Calu3 (cell line): ENCODE measurements at regions of chr7 and their contacts with region 1.

Region 1: DNA sequence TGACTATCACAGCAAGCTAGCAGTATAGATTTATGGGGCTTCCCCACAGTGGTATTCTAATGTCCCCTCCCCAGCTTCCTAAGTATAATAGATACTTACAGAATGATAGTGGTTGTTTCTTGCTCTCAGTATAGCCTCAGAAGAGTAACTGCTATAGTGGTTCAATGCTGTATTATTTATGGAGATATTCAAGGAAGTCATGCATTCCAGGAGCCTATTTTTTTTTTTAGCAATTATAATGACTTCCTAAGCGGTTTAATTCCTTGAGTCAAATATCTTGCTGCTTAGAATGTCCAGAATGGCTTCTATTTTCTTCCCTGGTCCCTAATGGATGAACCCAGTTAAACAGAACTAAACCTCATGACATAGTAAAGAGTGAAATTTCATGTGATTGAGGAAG is 451.5 kb upstream of the SEMA3D start:
- DNase-seq: no peak
- H3K4me3 Mint-ChIP-seq: no peak overlapping the region
- H3K27ac Mint-ChIP-seq: no peak overlapping the region
- H3K4me1 Mint-ChIP-seq: peaks cover 7% of the 10 kb centered on the region
- H3K27me3 Mint-ChIP-seq: no peaks in the 10 kb centered on the region
- CTCF ChIP-seq: no peak

Region 2: DNA sequence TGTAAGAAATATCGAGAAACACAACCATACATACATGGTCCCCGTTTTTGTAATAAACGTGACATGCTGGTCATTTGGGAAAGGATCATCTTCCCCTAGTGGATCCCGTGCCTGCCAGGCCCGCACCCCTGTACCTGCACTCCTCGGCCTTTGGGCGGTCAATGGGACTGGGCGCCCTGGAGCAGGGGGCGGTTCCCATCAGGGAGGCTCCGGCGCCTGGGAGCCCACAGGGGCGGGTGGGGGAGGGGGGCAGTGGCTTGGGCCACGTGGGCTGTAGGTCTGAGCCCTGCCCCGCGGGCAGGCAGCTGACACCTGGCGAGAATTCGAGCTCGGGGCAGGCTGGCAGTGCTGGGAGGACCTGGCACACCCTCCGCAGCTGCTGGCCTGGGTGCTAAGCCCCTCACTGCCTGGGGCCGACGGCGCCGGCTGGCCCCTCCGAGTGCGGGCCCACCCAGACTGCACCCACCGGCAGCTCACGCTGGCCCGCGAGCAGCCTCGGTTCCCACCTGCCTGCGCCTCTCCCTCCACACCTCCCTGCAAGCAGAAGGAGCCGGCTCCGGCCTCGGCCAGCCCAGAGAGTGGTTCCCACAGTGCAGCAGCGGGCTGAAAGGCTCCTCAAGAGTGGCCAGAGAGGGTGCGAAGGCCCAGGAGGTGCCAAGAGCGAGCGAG is 643.8 kb after region 1 on chr7:
- CTCF ChIA-PET with region 1: interaction called, 12 read pairs
- intact Hi-C with region 1: no loop called
- DNase-seq: no peak
- H3K4me3 Mint-ChIP-seq: no peak overlapping the region
- H3K27ac Mint-ChIP-seq: no peak overlapping the region
- H3K4me1 Mint-ChIP-seq: no peaks in the 10 kb centered on the region
- H3K27me3 Mint-ChIP-seq: no peaks in the 10 kb centered on the region
- CTCF ChIP-seq: no peak